A673 (cell line): ENCODE measurements at regions of chr15 and their contacts with region 1.

Region 1: DNA sequence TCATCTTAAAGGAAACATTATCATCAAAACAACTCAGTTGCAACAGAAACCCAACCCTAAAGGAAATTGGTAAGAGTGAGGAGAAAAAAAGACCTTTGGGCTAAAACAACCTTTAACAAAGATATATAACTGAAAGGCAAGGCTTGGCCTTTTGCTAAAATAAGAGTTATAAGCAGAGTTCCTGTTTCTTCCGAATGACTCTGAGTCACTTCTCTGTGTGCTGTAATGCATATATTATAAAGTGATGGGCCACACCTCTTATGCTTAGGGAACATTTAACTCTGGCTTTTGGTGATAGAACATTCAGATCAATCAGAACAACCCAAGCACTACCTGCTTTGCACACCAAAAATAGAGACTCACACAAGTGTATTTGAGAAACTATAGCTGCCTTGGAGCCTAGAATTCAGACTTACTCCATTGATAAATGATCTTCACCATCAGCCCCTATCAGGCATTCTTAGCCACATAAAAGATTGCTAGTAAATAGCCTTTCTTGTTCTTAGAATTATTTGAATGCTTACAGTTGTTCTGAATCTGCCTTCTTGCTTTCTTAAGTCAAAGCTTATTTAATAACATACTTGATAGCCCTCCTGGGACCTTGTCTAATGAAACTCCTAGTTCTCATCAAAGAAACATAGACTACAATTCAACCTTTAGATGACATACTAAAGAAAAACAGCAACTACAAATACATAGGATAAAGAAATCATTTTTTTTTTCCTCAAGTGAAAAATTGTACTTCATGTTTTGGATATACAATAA is 294.2 kb upstream of the SEMA6D start:
- DNase-seq: no peak
- H3K4me3 ChIP-seq: no peak overlapping the region
- H3K27ac ChIP-seq: peak overlapping the region; percentile 84
- H3K4me1 ChIP-seq: peaks cover 68% of the 10 kb centered on the region
- H3K27me3 ChIP-seq: no peaks in the 10 kb centered on the region
- CTCF ChIP-seq: no peak

Region 2: GRCh38 chr15:46080016-46080415 is 1343.1 kb before region 1 on chr15:
- CTCF ChIA-PET with region 1: no interaction called
- POLR2A ChIA-PET with region 1: no interaction called
- intact Hi-C with region 1: no loop called
- DNase-seq: peak; percentile 90
- H3K4me3 ChIP-seq: no peak overlapping the region
- H3K27ac ChIP-seq: peak overlapping the region; percentile 18
- H3K4me1 ChIP-seq: peaks cover 31% of the 10 kb centered on the region
- H3K27me3 ChIP-seq: no peaks in the 10 kb centered on the region
- CTCF ChIP-seq: no peak

Region 3: DNA sequence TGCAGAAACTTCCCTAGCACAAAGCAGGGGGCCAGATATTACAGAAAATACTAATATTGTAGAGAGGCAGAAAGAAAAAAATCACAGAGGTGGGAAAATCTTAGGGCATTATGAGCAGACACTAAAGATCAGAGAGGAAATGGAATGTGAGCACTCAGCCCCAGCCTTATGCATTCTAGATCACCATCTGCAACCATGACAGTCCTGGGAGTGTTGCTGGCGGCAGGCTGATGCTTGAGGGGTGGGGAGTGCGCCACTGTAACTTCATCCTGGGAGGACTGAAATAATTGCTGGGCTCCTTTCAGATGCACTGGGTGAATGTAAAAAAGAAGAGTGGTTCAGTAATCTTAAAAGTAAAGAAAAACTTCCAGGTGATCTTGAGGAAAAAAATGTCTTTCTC is 133.4 kb before region 1 on chr15:
- CTCF ChIA-PET with region 1: no interaction called
- POLR2A ChIA-PET with region 1: no interaction called
- intact Hi-C with region 1: loop called (anchors 2 kb)
- DNase-seq: peak; percentile 49
- H3K4me3 ChIP-seq: no peak overlapping the region
- H3K27ac ChIP-seq: peak overlapping the region; percentile 81
- H3K4me1 ChIP-seq: peaks cover 66% of the 10 kb centered on the region
- H3K27me3 ChIP-seq: no peaks in the 10 kb centered on the region
- CTCF ChIP-seq: no peak

Region 4: GRCh38 chr15:47409600-47409999 is 13.5 kb before region 1 on chr15:
- CTCF ChIA-PET with region 1: no interaction called
- POLR2A ChIA-PET with region 1: interaction called, 20 read pairs
- intact Hi-C with region 1: no loop called
- DNase-seq: no peak
- H3K4me3 ChIP-seq: no peak overlapping the region
- H3K27ac ChIP-seq: peak overlapping the region; percentile 73
- H3K4me1 ChIP-seq: peaks cover 66% of the 10 kb centered on the region
- H3K27me3 ChIP-seq: no peaks in the 10 kb centered on the region
- CTCF ChIP-seq: no peak

Region 5: GRCh38 chr15:47618241-47618640 is 195.2 kb after region 1 on chr15:
- CTCF ChIA-PET with region 1: no interaction called
- POLR2A ChIA-PET with region 1: no interaction called
- intact Hi-C with region 1: loop called (anchors 5 kb)
- DNase-seq: no peak
- H3K4me3 ChIP-seq: no peak overlapping the region
- H3K27ac ChIP-seq: no peak overlapping the region
- H3K4me1 ChIP-seq: peaks cover 8% of the 10 kb centered on the region
- H3K27me3 ChIP-seq: no peaks in the 10 kb centered on the region
- CTCF ChIP-seq: no peak

Region 6: DNA sequence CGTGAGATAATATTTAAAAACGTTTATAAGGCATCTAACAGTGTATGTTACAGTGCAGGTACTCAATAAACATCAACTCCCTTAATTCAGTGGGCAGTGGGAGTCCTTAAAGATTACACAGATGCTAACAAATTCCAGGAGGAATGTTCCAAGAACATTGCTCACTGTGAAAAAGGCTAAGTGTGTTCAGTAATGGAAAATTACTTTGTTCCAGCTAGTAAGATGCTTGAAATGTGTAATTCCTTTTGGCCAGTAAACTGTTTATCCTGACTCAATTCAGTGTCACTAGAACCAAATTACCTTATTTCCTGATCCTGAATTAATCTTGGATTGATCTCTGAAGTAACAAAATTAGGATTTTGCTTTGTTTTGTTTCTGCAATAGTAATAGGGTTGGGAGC is 240.0 kb after region 1 on chr15:
- CTCF ChIA-PET with region 1: no interaction called
- POLR2A ChIA-PET with region 1: no interaction called
- intact Hi-C with region 1: no loop called
- DNase-seq: no peak
- H3K4me3 ChIP-seq: no peak overlapping the region
- H3K27ac ChIP-seq: no peak overlapping the region
- H3K4me1 ChIP-seq: peaks cover 31% of the 10 kb centered on the region
- H3K27me3 ChIP-seq: no peaks in the 10 kb centered on the region
- CTCF ChIP-seq: no peak

Region 7: GRCh38 chr15:47959617-47960413 is 536.7 kb after region 1 on chr15:
- CTCF ChIA-PET with region 1: no interaction called
- POLR2A ChIA-PET with region 1: no interaction called
- intact Hi-C with region 1: loop called (anchors 10 kb)
- DNase-seq: no peak
- H3K4me3 ChIP-seq: no peak overlapping the region
- H3K27ac ChIP-seq: no peak overlapping the region
- H3K4me1 ChIP-seq: peaks cover 39% of the 10 kb centered on the region
- H3K27me3 ChIP-seq: no peaks in the 10 kb centered on the region
- CTCF ChIP-seq: no peak